ENCODE measurements at regions of chr9 and their contacts with region 1.

Region 1: GRCh38 chr9:21031091-21031807 is at the start of gene HACD4:
- DNase-seq: peak; percentile 78
- H3K4me3 Mint-ChIP-seq: peak within 1 kb of the TSS; percentile 49
- H3K27ac Mint-ChIP-seq: peak within 1 kb of the TSS; percentile 69
- H3K4me1 Mint-ChIP-seq: peaks cover 25% of the 10 kb centered on the region
- H3K27me3 Mint-ChIP-seq: no peaks in the 10 kb centered on the region
- total RNA-seq, gene HACD4: 1.1 to 1.6 TPM

Region 2: DNA sequence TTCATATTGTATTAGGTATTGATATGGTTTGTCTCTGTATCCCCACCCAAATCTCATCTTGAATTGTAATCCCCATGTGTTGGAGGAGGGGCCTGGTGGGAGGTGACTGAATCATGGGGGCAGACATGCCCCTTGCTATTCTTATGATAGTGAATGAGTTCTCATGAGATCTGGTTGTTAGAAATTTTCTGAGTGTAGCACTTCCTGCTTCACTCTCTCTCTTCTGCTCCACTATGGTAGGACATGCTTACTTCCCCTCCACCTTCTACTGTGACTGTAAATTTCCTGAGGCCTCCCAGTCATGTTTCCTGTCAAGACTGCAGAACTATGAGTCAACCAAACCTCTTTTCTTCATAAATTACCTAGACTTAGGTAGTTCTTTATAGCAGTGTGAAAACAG is 1055.0 kb before region 1 on chr9:
- CTCF ChIA-PET with region 1: no interaction called
- intact Hi-C with region 1: loop called (anchors 1 kb)
- DNase-seq: peak; percentile 69
- H3K4me3 Mint-ChIP-seq: no peak overlapping the region
- H3K27ac Mint-ChIP-seq: peak overlapping the region; percentile 83
- H3K4me1 Mint-ChIP-seq: peaks cover 28% of the 10 kb centered on the region
- H3K27me3 Mint-ChIP-seq: no peaks in the 10 kb centered on the region

Region 3: DNA sequence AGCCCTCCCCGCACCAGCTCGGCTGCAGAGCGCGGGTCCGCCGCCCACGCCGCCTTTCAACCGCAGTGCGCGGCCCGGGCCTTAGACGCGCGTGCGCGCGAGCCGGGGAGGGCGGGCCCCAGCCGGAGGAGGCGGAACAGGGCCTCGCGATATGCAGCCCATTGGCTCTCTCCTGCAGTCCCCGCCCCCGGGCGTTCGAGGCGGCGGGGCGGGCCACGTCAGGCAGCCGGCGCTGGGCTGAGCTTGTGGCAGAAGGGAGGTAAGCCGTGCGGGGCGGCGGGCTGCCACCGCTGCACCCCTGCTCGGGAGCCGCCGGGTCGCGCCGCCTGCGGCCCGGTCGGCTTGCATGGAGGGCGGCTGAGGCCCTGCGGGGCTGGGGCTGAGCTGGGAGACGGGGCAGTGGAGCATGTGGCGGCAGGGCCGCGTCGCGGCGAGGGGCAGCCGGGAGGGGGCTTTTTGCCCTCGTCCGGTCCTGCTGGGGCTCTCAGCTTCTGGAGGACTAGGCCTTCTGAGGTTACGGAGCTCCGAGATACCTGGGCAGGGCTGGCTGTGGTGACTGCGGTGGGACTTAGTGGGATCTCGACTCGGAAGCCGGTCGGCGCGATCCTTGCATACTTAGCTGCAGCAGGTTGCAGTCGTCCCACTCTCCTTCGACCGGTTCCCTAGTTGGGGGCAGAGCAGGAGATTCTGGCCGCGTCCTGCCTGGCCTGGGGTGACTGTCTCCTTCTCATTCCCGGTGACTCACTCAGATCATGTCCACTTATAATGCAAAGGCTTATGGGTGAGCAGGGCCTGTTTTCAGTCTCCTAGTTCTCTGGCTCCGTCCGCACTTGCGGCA is 347.0 kb before region 1 on chr9 and contains the start of gene FOCAD:
- CTCF ChIA-PET with region 1: no interaction called
- intact Hi-C with region 1: loop called (anchors 1 kb)
- DNase-seq: peak; percentile 95
- H3K4me3 Mint-ChIP-seq: peak within 1 kb of the TSS; percentile 88
- H3K27ac Mint-ChIP-seq: peak within 1 kb of the TSS; percentile 76
- H3K4me1 Mint-ChIP-seq: peaks cover 17% of the 10 kb centered on the region
- H3K27me3 Mint-ChIP-seq: no peaks in the 10 kb centered on the region
- total RNA-seq, gene FOCAD: 31.7 to 32.2 TPM

Region 4: GRCh38 chr9:20884985-20885593 is 146.2 kb before region 1 on chr9:
- CTCF ChIA-PET with region 1: no interaction called
- intact Hi-C with region 1: no loop called
- DNase-seq: peak; percentile 78
- H3K4me3 Mint-ChIP-seq: no peak overlapping the region
- H3K27ac Mint-ChIP-seq: no peak overlapping the region
- H3K4me1 Mint-ChIP-seq: no peaks in the 10 kb centered on the region
- H3K27me3 Mint-ChIP-seq: no peaks in the 10 kb centered on the region

Region 5: DNA sequence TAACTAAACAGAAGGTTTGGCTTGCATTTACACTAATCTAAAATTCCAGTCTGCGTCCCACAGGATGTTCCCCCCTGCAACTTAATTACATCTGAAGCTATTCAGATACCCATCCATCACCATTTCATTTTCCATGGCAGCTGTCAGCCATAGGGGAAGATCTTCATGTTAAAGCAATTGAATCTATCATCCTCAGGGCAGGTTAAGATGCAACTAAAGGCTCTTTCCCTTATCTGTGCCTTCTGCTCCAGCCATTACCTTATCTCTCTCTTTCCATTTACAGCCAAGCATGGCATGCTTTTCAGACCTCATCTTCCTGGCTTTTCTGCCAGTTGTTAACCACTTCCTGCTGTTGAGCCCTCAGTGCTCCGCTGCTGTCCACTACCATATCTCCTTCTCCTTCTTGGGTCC is 16.0 kb after region 1 on chr9:
- CTCF ChIA-PET with region 1: no interaction called
- intact Hi-C with region 1: no loop called
- DNase-seq: no peak
- H3K4me3 Mint-ChIP-seq: no peak overlapping the region
- H3K27ac Mint-ChIP-seq: no peak overlapping the region
- H3K4me1 Mint-ChIP-seq: no peaks in the 10 kb centered on the region
- H3K27me3 Mint-ChIP-seq: no peaks in the 10 kb centered on the region

Region 6: GRCh38 chr9:21096172-21096900 is 65.1 kb after region 1 on chr9:
- CTCF ChIA-PET with region 1: interaction called, 4 read pairs
- intact Hi-C with region 1: loop called (anchors 1 kb)
- DNase-seq: peak; percentile 67
- H3K4me3 Mint-ChIP-seq: peak overlapping the region; percentile 76
- H3K27ac Mint-ChIP-seq: peak overlapping the region; percentile 94
- H3K4me1 Mint-ChIP-seq: peaks cover 39% of the 10 kb centered on the region
- H3K27me3 Mint-ChIP-seq: no peaks in the 10 kb centered on the region

Region 7: GRCh38 chr9:21802195-21803000 is 771.1 kb after region 1 on chr9 and contains the start of gene MTAP:
- CTCF ChIA-PET with region 1: no interaction called
- intact Hi-C with region 1: loop called (anchors 2 kb)
- DNase-seq: peak; percentile 82
- H3K4me3 Mint-ChIP-seq: peak within 1 kb of the TSS; percentile 99
- H3K27ac Mint-ChIP-seq: peak within 1 kb of the TSS; percentile 97
- H3K4me1 Mint-ChIP-seq: peaks cover 41% of the 10 kb centered on the region
- H3K27me3 Mint-ChIP-seq: peaks cover 4% of the 10 kb centered on the region
- total RNA-seq, gene MTAP: 59.0 to 66.4 TPM